Colonic mucosa (tissue), 4 donors: ENCODE measurements at regions of chr14 and their contacts with region 1.

Region 1: GRCh38 chr14:52473557-52473956 is 78.7 kb downstream of the TXNDC16 start:
- DNase-seq: no peak
- H3K4me3 ChIP-seq: no peak overlapping the region
- H3K27ac ChIP-seq: no peak overlapping the region
- H3K4me1 ChIP-seq: no peaks in the 10 kb centered on the region
- H3K27me3 ChIP-seq: no peaks in the 10 kb centered on the region
- CTCF ChIP-seq: peak; percentile 32

Region 2: GRCh38 chr14:52003324-52003723 is 470.2 kb before region 1 on chr14:
- intact Hi-C with region 1: loop called (anchors 10 kb)
- DNase-seq: no peak
- H3K4me3 ChIP-seq: no peak overlapping the region
- H3K27ac ChIP-seq: no peak overlapping the region
- H3K4me1 ChIP-seq: no peaks in the 10 kb centered on the region
- H3K27me3 ChIP-seq: no peaks in the 10 kb centered on the region
- CTCF ChIP-seq: no peak

Region 3: GRCh38 chr14:52299692-52300278 is 173.8 kb before region 1 on chr14:
- intact Hi-C with region 1: loop called (anchors 5 kb)
- DNase-seq: no peak
- H3K4me3 ChIP-seq: no peak overlapping the region
- H3K27ac ChIP-seq: no peak overlapping the region
- H3K4me1 ChIP-seq: no peaks in the 10 kb centered on the region
- H3K27me3 ChIP-seq: no peaks in the 10 kb centered on the region
- CTCF ChIP-seq: peak; percentile 71

Region 4: GRCh38 chr14:52310541-52310940 is 163.0 kb before region 1 on chr14:
- intact Hi-C with region 1: no loop called
- DNase-seq: no peak
- H3K4me3 ChIP-seq: no peak overlapping the region
- H3K27ac ChIP-seq: no peak overlapping the region
- H3K4me1 ChIP-seq: no peaks in the 10 kb centered on the region
- H3K27me3 ChIP-seq: no peaks in the 10 kb centered on the region
- CTCF ChIP-seq: no peak